Mucosa of descending colon (tissue), 3 donors: ENCODE measurements at regions of chr2 and their contacts with region 1.

Region 1: GRCh38 chr2:237744613-237745249 is 53.8 kb upstream of the RBM44 start:
- DNase-seq: peak; percentile 76 to 90 (median 88)
- ATAC-seq: peak; percentile 85
- H3K4me3 ChIP-seq: no peak overlapping the region
- H3K4me1 ChIP-seq: peaks cover 37% of the 10 kb centered on the region
- CTCF ChIP-seq: peak; percentile 96

Region 2: GRCh38 chr2:237581751-237582746 is 162.7 kb before region 1 on chr2:
- intact Hi-C with region 1: loop called (anchors 10 kb)
- DNase-seq: peak in 1 of 3 donors; percentile 21
- ATAC-seq: peak; percentile 33
- H3K4me3 ChIP-seq: no peak overlapping the region
- H3K4me1 ChIP-seq: no peaks in the 10 kb centered on the region
- CTCF ChIP-seq: no peak

Region 3: DNA sequence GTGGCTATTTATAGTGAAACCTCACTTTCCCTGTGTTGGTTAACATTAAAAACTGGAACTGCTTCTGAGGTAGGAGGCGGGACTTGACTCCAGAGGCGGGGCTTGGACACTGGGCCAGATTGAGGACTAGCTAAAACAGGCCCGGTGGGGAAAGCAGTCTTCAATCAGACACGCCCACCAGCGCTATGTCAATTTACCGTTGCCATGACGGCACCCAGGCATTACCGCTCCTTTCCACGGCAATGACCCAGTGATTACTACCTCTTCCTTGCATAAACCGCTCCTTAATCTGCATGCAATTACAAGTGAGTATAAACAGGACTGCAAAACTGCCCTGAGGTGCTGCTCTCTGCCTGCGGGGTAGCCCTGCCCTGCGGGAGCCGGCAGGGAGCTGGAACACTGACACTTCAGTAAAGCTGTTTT is 82.0 kb before region 1 on chr2:
- intact Hi-C with region 1: loop called in 1 of 2 experiments (anchors 5 kb)
- DNase-seq: peak; percentile 90 to 96 (median 94)
- ATAC-seq: peak; percentile 98
- H3K4me3 ChIP-seq: no peak overlapping the region
- H3K4me1 ChIP-seq: peaks cover 27% of the 10 kb centered on the region
- CTCF ChIP-seq: no peak

Region 4: DNA sequence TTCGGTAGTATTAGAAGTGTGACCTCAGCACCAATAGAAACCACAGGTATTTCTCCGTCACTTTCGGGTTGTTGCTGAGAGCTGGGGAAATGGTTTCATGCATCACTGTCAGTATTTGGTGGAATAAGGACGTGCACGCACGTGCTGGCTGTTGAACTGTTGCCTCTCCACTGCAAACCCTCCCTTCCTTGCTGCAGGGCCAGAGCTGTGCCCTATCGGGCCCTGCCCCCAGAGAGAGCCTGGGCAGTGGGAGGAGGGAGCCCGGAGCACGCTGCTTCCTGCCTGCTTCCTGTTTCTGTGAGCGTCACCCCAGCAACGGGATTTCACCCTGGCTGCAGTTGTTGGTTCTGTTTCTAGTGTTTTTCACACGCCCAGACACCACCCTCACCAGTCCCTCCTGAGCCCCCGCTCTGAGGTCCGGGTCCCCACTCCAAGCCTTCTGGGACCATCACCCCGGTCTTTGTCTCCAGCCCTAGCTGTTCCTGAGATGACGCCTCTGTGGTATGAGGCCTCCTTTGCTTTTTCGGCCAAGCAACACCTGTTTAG is 69.9 kb before region 1 on chr2:
- intact Hi-C with region 1: loop called in 1 of 2 experiments (anchors 5 kb)
- DNase-seq: peak; percentile 85 to 92 (median 88)
- ATAC-seq: peak; percentile 87
- H3K4me3 ChIP-seq: no peak overlapping the region
- H3K4me1 ChIP-seq: peaks cover 35% of the 10 kb centered on the region
- CTCF ChIP-seq: no peak